ENCODE measurements at regions of chr2 and their contacts with region 1.

Region 1: DNA sequence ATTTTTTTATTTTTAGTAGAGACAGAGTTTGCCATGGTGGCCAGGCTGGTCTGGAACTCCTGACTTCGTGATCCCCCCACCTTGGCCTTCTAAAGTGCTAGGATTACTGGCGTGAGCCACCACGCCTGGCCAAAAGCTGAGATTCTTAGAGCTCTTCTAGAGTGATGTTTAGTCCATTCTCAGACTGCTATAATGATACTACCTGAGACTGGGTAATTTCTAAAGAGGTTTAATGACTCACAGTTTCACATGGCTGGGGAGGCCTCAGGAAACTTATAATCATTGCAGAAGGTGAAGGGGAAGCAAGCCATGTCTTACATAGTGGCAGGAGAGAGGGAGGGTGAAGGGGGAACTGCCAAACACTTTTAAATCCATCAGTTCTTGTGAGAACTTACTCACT is 1804.9 kb upstream of the LRRTM1 start:
- DNase-seq: no peak
- H3K4me3 ChIP-seq: no peak overlapping the region
- H3K27ac ChIP-seq: no peak overlapping the region
- H3K4me1 ChIP-seq: no peaks in the 10 kb centered on the region
- H3K27me3 ChIP-seq: no peaks in the 10 kb centered on the region
- CTCF ChIP-seq: no peak
- POLR2A ChIP-seq: no peak

Region 2: GRCh38 chr2:83196225-83196624 is 1086.8 kb after region 1 on chr2:
- intact Hi-C with region 1: loop called (anchors 5 kb)
- DNase-seq: no peak
- H3K4me3 ChIP-seq: no peak overlapping the region
- H3K27ac ChIP-seq: no peak overlapping the region
- H3K4me1 ChIP-seq: no peaks in the 10 kb centered on the region
- H3K27me3 ChIP-seq: no peaks in the 10 kb centered on the region
- CTCF ChIP-seq: peak in 1 of 3 donors; percentile 43
- POLR2A ChIP-seq: no peak

Measured in breast epithelium (tissue), 4 donors.